ENCODE measurements at regions of chr4 and their contacts with region 1.

Region 1: DNA sequence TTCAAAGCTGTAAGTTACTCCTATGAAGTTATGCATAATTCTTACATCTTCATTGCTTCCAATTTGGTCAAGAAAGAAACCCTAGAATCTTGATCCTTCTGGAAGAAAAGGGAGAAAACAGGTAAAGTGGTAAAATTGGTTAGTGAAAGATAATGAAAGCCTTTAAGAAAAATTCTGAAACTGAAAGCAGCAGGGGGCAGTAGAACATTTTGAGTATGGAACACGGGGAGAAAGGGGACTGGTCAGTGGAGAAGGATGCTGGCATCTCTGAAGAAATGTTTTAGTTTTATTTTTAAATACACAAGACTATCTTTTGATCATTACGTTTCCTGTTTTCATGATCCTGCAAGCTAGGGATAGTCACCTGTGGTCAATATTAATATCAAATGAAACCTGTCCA is 54.3 kb downstream of the SLIT2 start:
- DNase-seq: peak; percentile 40
- H3K4me3 ChIP-seq: no peak overlapping the region
- H3K27ac ChIP-seq: no peak overlapping the region
- H3K4me1 ChIP-seq: no peaks in the 10 kb centered on the region; a peak in 1 of 4 replicates
- H3K27me3 ChIP-seq: no peaks in the 10 kb centered on the region
- CTCF ChIP-seq: peak; percentile 64
- EP300 ChIP-seq: no peak
- RAD21 ChIP-seq: peak; percentile 81

Region 2: GRCh38 chr4:20251796-20252655 is 54.0 kb before region 1 on chr4 and contains the start of gene SLIT2:
- CTCF ChIA-PET with region 1: no interaction called
- POLR2A ChIA-PET with region 1: no interaction called
- DNase-seq: peak; percentile 96
- H3K4me3 ChIP-seq: peak within 1 kb of the TSS; percentile 78 to 96
- H3K27ac ChIP-seq: peak within 1 kb of the TSS; percentile 53 to 74
- H3K4me1 ChIP-seq: peaks cover 13 to 26% of the 10 kb centered on the region in 2 experiments
- H3K27me3 ChIP-seq: no peaks in the 10 kb centered on the region
- CTCF ChIP-seq: no peak
- EP300 ChIP-seq: peak in 1 of 2 experiments; percentile 43; a peak in 1 of 4 replicates
- RAD21 ChIP-seq: no peak
- polyA plus RNA-seq, gene SLIT2: 53.6 and 68.7 TPM in 2 replicates

Region 3: GRCh38 chr4:20318001-20318908 is 12.3 kb after region 1 on chr4:
- CTCF ChIA-PET with region 1: interaction called, 13 read pairs
- POLR2A ChIA-PET with region 1: no interaction called
- DNase-seq: no peak
- H3K4me3 ChIP-seq: no peak overlapping the region
- H3K27ac ChIP-seq: peak overlapping the region in 1 of 2 experiments; percentile 13; a peak in 1 of 4 replicates
- H3K4me1 ChIP-seq: peaks cover 0 to 35% of the 10 kb centered on the region in 2 experiments; a peak in 2 of 4 replicates
- H3K27me3 ChIP-seq: no peaks in the 10 kb centered on the region
- CTCF ChIP-seq: no peak
- EP300 ChIP-seq: no peak
- RAD21 ChIP-seq: no peak

Region 4: DNA sequence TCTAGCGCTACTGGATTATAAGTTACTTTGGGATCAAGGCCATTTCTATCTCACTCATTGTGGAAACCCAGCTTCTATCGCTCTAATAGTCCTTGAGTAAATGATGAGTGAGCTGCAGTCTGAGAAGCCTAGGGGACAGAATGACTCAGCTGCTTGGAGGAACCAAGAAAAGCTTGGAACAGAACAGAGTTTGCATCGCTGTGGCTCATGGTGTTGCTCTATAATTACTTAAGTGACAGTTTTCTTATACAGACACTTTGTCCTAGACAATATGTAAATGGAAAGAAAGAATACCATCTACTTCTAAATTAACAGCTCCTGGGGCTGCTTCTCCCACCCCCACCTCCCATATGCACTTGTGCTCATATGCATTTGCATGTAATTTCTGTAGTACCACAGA is 102.6 kb after region 1 on chr4:
- CTCF ChIA-PET with region 1: interaction called, 33 read pairs
- POLR2A ChIA-PET with region 1: no interaction called
- DNase-seq: no peak
- H3K4me3 ChIP-seq: no peak overlapping the region
- H3K27ac ChIP-seq: peak overlapping the region in 1 of 2 experiments; percentile 15; a peak in 1 of 4 replicates
- H3K4me1 ChIP-seq: 0 out of 4 replicates have a peak, but pooled peaks cover 0 to 7% of the 10 kb centered on the region in 2 experiments
- H3K27me3 ChIP-seq: no peaks in the 10 kb centered on the region
- CTCF ChIP-seq: no peak
- EP300 ChIP-seq: no peak
- RAD21 ChIP-seq: no peak

Region 5: DNA sequence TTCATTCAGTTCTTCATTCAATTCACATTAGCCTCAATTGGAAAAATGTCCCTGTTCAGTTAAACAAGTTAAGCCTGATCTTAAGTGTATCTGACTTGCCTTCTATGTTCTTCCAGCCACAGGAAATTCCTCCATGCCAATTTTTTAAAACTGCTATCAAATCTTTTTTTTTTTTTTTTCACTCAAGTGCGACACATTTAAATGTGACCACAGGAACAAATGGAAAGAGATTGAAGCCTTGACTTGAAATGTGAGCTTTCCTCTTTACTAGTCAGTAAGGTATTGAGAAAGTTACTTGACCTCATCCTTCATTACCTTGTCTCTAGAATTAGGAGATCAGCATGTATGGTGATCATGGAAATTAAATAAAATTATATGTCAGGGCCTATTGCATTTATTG is 110.8 kb after region 1 on chr4:
- CTCF ChIA-PET with region 1: interaction called, 33 read pairs
- POLR2A ChIA-PET with region 1: no interaction called
- DNase-seq: no peak
- H3K4me3 ChIP-seq: no peak overlapping the region
- H3K27ac ChIP-seq: peak overlapping the region in 1 of 2 experiments; percentile 17; a peak in 1 of 4 replicates
- H3K4me1 ChIP-seq: peaks cover 0 to 16% of the 10 kb centered on the region in 2 experiments; a peak in 3 of 4 replicates
- H3K27me3 ChIP-seq: no peaks in the 10 kb centered on the region
- CTCF ChIP-seq: no peak
- EP300 ChIP-seq: no peak; a peak in 1 of 4 replicates
- RAD21 ChIP-seq: no peak

Region 6: GRCh38 chr4:20422398-20422797 is 116.4 kb after region 1 on chr4:
- CTCF ChIA-PET with region 1: interaction called, 33 read pairs
- POLR2A ChIA-PET with region 1: no interaction called
- DNase-seq: peak; percentile 46
- H3K4me3 ChIP-seq: no peak overlapping the region
- H3K27ac ChIP-seq: no peak overlapping the region
- H3K4me1 ChIP-seq: peaks cover 0 to 20% of the 10 kb centered on the region in 2 experiments
- H3K27me3 ChIP-seq: no peaks in the 10 kb centered on the region
- CTCF ChIP-seq: peak; percentile 62
- EP300 ChIP-seq: no peak
- RAD21 ChIP-seq: peak; percentile 78